Cardiac septum (tissue), 1 donor: ENCODE measurements at regions of chr20 and their contacts with region 1.

Region 1: GRCh38 chr20:35771689-35772562 is at the start of gene PHF20:
- DNase-seq: peak; percentile 100
- total RNA-seq, gene PHF20: 28.9 TPM

Region 2: DNA sequence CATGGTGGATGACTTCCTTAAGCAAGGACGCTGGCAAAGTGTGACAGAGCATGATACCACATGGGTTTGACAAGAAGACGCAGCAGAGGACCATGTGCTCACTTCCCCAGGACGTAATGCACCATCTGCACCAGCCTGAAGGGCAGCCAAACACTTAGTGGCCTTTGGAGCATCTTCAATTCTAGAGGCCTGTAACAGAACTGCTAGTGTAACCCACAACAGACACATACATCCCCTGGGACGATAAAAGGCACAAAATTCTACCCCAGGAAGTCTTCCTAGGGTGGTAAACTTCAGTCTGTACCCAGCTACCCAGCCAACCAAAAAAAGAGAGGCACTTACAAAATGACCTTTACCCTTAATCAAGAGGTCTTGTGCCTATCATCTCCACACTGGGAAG is 98.0 kb before region 1 on chr20:
- intact Hi-C with region 1: no loop called
- DNase-seq: no peak

Region 3: GRCh38 chr20:35954200-35954906 is 182.4 kb after region 1 on chr20 and contains the start of gene SCAND1:
- intact Hi-C with region 1: loop called (anchors 10 kb)
- DNase-seq: peak; percentile 98
- total RNA-seq, gene SCAND1: 49.5 TPM